ENCODE measurements at regions of chr7 and their contacts with region 1.

Region 1: GRCh38 chr7:94482397-94483185 is 27.0 kb upstream of the CASD1 start:
- DNase-seq: no peak

Region 2: GRCh38 chr7:94223375-94224070 is 259.1 kb before region 1 on chr7:
- intact Hi-C with region 1: no loop called
- DNase-seq: no peak

Region 3: GRCh38 chr7:94266238-94266644 is 216.3 kb before region 1 on chr7:
- intact Hi-C with region 1: no loop called
- DNase-seq: no peak

Region 4: DNA sequence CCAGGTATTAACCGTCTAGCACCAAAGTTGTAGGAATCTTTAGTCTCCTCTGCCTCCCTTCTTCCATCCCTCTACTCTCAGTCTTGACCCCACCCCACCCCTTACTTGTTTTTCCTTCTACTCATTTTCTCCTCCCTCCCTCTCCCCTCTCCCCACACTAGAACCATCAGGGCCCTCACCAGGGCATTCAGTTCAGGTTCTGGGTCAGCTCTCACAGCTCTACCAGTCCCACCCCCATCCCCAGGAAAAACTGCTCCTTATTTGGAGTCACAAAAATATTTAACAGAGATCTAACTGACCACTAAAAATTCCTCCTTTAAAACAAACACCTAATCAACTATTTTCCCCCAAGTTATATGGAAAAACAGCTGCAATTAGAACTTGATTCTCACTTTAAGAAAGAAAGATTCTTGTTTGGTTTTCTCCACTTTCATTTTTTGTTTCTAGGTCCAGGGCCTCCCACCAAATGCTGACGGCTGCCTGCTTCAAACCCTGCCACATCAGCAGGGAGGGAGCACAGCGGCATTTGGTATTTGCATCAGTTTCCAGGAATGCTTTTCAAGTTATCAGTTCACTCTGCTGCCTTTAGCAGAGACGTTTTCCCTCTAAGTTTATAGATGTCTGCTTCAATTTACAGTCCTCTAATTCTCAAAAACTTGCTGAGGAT is 90.7 kb before region 1 on chr7:
- intact Hi-C with region 1: no loop called
- DNase-seq: peak; percentile 81

Region 5: GRCh38 chr7:94466516-94466915 is 16.1 kb before region 1 on chr7:
- intact Hi-C with region 1: loop called in 1 of 2 experiments (anchors 1 kb)
- DNase-seq: no peak